ENCODE measurements at regions of chr4 and their contacts with region 1.

Region 1: GRCh38 chr4:6873792-6874461 is 35.7 kb upstream of the TBC1D14 start:
- DNase-seq: peak; percentile 85
- ATAC-seq: peak; percentile 85
- H3K4me3 Mint-ChIP-seq: no peak overlapping the region
- H3K27ac Mint-ChIP-seq: no peak overlapping the region
- H3K4me1 Mint-ChIP-seq: peaks cover 12% of the 10 kb centered on the region
- H3K27me3 Mint-ChIP-seq: no peaks in the 10 kb centered on the region

Region 2: DNA sequence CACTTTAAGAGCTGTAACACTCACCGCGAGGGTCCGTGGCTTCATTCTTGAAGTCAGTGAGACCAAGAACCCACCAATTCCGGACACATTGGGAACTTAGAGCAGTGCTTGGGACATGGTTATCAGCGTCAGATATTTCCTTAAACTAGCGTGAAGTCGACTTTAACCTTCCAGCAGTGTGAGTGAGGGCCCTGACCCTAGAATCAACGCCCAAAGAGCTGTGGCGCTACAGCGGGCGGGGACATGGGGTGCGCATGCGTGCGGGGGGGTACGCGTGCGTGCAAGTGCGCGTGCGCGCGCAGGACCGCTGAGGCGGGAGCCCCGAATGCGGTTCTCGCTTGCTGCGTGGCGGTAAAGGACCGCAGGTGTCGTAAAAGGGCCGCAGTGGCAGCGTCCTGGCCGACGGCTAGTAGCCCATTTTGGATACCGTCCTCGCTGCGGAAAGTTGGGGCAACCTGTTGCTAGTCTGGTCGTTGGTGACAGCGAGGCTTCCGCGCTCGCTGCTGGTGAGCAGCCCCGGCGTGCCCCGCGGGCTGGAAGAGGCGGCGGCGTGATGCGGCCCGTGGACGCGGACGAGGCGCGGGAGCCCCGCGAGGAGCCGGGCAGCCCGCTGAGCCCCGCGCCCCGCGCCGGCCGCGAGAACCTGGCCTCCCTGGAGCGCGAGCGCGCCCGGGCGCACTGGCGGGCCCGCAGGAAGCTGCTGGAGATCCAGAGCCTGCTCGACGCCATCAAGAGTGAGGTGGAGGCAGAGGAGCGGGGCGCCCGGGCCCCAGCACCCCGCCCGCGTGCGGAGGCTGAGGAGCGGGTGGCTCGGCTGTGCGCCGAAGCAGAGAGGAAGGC is 200.0 kb before region 1 on chr4:
- CTCF ChIA-PET with region 1: interaction called, 38 read pairs
- POLR2A ChIA-PET with region 1: interaction called, 9 read pairs
- DNase-seq: peak; percentile 96
- ATAC-seq: peak; percentile 75
- H3K4me3 Mint-ChIP-seq: peak overlapping the region; percentile 94
- H3K27ac Mint-ChIP-seq: peak overlapping the region; percentile 100
- H3K4me1 Mint-ChIP-seq: peaks cover 45% of the 10 kb centered on the region
- H3K27me3 Mint-ChIP-seq: no peaks in the 10 kb centered on the region

Region 3: GRCh38 chr4:6768539-6768905 is 105.4 kb before region 1 on chr4:
- CTCF ChIA-PET with region 1: interaction called, 11 read pairs
- POLR2A ChIA-PET with region 1: no interaction called
- DNase-seq: no peak
- ATAC-seq: no peak
- H3K4me3 Mint-ChIP-seq: no peak overlapping the region
- H3K27ac Mint-ChIP-seq: no peak overlapping the region
- H3K4me1 Mint-ChIP-seq: peaks cover 20% of the 10 kb centered on the region
- H3K27me3 Mint-ChIP-seq: peaks cover 2% of the 10 kb centered on the region

Region 4: GRCh38 chr4:6794189-6794588 is 79.7 kb before region 1 on chr4:
- CTCF ChIA-PET with region 1: interaction called, 11 read pairs
- POLR2A ChIA-PET with region 1: no interaction called
- DNase-seq: no peak
- ATAC-seq: peak; percentile 44
- H3K4me3 Mint-ChIP-seq: no peak overlapping the region
- H3K27ac Mint-ChIP-seq: peak overlapping the region; percentile 60
- H3K4me1 Mint-ChIP-seq: peaks cover 42% of the 10 kb centered on the region
- H3K27me3 Mint-ChIP-seq: no peaks in the 10 kb centered on the region

Region 5: DNA sequence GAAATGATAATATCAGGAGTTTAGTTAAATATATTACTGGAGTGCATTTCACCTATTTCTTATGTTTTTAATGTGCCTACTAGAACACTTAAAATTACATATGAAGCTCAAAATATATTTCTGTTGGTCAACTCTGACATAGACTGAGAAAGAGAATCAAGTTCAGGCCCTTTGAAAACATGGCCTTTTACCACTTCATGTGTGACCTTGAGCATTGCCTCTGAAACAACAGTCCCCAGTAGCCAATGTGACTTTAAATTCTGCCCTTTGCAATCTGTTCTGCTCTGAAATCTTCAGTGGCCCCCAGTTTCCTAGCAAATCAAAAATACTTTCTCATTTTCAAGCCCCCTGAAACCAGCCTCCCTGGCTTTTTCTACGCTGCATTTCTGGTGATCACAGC is 14.4 kb before region 1 on chr4:
- CTCF ChIA-PET with region 1: interaction called, 32 read pairs
- POLR2A ChIA-PET with region 1: no interaction called
- DNase-seq: no peak
- ATAC-seq: no peak
- H3K4me3 Mint-ChIP-seq: no peak overlapping the region
- H3K27ac Mint-ChIP-seq: no peak overlapping the region
- H3K4me1 Mint-ChIP-seq: peaks cover 13% of the 10 kb centered on the region
- H3K27me3 Mint-ChIP-seq: no peaks in the 10 kb centered on the region

Region 6: DNA sequence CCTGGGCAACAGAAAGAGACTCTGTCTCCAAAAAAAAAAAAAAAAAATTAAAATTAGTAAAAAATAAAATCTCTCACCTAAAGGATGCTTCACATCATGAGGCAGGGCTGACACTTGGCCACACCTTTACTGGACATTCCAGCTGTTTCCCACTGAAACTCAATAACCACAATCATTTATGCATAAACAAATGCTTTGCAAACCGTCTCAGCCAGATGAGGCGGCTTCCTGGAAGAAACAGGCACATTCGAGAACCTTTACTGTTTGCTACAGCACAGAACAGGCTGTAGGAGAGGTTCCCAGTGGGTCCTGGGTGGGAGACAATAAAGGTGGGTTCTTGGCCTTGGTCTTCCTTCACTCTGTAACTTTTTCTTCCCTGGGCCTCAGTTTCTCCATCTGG is 24.8 kb after region 1 on chr4:
- CTCF ChIA-PET with region 1: interaction called, 14 read pairs
- POLR2A ChIA-PET with region 1: no interaction called
- DNase-seq: no peak
- ATAC-seq: peak; percentile 31
- H3K4me3 Mint-ChIP-seq: peak overlapping the region; percentile 30
- H3K27ac Mint-ChIP-seq: peak overlapping the region; percentile 95
- H3K4me1 Mint-ChIP-seq: peaks cover 41% of the 10 kb centered on the region
- H3K27me3 Mint-ChIP-seq: no peaks in the 10 kb centered on the region

Region 7: DNA sequence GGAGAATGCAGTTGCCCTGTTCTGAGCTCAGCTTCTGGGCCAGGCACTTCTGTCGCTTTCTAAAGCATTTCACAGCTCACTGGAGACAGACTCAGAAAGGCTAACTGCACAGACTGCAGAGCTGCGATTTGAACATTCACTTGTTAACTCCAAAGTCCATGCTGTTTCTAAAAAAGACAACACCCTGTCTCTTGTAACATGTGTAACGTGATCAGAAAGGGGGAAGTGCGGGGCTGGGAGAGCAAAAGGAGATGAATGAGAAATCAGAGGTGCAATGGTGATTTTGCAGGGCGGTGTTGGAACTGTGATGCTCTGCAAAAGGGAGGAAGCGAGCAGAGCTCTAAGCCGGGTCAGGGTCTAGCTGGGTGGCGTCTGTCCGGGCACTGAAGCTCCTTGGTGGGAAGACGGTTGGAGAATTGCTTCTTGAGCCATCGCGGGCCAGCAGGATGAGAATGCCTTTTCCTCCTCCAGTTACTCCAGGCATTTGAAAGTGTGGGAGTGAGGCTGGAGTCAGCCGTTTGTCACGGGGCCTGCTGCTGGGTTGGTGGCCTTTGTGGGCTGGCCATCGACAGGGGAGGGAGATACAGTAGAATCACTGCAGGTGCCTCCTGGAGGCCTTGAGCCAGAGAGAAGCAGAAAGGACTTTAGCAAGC is 56.0 kb after region 1 on chr4:
- CTCF ChIA-PET with region 1: no interaction called
- POLR2A ChIA-PET with region 1: no interaction called
- DNase-seq: no peak
- ATAC-seq: no peak
- H3K4me3 Mint-ChIP-seq: no peak overlapping the region
- H3K27ac Mint-ChIP-seq: no peak overlapping the region
- H3K4me1 Mint-ChIP-seq: peaks cover 49% of the 10 kb centered on the region
- H3K27me3 Mint-ChIP-seq: no peaks in the 10 kb centered on the region